ENCODE measurements at regions of chr1 and their contacts with region 1.

Region 1: DNA sequence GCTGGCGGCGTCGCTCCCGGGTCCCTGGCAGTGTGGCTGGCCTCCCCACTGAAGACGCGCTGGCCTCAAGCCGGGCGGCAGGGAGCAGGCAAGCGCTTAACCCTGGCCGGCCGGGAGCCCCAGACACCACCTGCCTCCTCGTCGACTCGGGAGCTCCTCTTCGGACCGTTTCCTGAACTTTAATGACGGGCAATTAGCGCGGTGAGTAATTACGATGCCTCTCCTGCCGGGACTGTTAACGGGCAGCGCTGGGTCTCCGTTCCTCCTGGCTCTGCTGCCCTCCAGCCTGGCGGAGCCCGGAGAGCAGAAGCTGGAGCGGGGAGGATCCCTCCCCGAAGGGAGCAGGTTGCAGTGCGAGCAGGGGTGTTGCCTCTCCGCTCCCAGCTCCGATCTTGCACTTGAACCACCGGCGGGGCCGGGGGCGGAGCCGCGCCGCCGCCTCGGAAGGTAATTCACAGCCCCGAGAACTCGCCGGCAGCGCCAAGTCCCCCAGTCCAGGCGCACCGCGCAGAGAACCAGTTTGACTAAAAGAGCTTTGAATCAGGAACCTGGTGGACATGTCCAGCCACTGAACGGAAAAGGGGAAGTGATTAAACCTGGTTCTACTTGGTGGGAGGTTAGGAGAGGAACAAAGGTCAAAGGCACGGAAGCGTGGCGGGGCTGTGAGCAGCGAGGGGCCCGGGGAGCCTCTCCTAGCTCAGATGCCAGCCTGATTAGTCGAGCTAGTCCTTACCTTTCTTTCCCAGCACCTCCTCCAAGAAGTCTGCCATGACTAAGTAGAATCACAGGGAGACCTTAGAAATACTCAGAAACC is 18.3 kb upstream of the PLEKHA6 start:
- DNase-seq: peak; percentile 28 to 57 (median 46)
- ATAC-seq: peak; percentile 71
- H3K4me3 ChIP-seq: peak overlapping the region; percentile 70
- H3K4me3 Mint-ChIP-seq: peak overlapping the region in 9 of 10 donors; percentile 88 to 96 (median 93)
- H3K27ac ChIP-seq: peak overlapping the region; percentile 4
- H3K27ac Mint-ChIP-seq: peak overlapping the region in 5 of 9 donors; percentile 3 to 79 (median 55)
- H3K4me1 ChIP-seq: peaks cover 4 to 6% of the 10 kb centered on the region in 2 donors
- H3K4me1 Mint-ChIP-seq: peaks cover 8 to 20% (median 13%) of the 10 kb centered on the region in 7 donors
- H3K27me3 ChIP-seq: peaks cover 0 to 9% of the 10 kb centered on the region in 2 donors
- H3K27me3 Mint-ChIP-seq: peaks cover 6 to 45% (median 11%) of the 10 kb centered on the region in 5 donors

Region 2: DNA sequence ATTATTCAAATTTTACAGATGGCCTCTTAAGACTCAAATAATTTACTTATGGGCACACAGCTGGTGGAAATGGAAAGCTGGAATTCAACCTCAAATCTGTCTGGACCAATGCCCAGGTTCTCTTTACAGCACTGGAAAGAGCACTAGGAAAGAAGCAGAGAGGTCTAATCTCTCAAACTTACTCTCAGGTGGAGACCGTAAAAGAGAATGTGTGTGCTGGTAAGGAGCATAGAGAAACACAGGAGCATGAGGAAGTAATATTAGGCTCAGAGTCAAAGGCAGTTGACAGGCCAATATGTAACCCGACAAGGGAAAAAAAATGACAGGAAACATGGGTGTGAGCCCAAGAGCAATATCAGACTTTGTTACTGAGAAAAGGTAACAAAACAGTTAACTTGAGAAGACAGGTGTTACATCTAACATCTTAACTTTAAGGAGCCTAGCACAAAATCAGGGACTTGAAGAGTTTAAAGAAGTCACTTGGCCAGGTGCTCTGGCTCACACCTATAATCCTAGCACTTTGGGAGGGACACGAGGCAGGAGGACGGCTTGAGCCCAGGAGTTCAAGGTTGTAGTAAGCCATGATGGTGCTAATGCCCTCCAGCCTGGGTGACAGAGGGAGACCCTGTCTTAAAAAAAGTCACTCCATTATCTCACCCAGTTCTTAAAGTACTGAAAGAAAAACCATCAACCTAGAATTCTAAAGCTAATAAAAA is 12.9 kb after region 1 on chr1:
- CTCF ChIA-PET with region 1: interaction called, 3 read pairs
- POLR2A ChIA-PET with region 1: interaction called, 3 read pairs
- intact Hi-C with region 1: loop called in 1 of 2 experiments (anchors 1 kb)
- DNase-seq: no peak
- ATAC-seq: no peak
- H3K4me3 ChIP-seq: no peak overlapping the region
- H3K4me3 Mint-ChIP-seq: peak overlapping the region in 1 of 10 donors; percentile 8
- H3K27ac ChIP-seq: no peak overlapping the region
- H3K27ac Mint-ChIP-seq: peak overlapping the region in 8 of 9 donors; percentile 6 to 82 (median 38)
- H3K4me1 ChIP-seq: peaks cover 0 to 12% of the 10 kb centered on the region in 2 donors
- H3K4me1 Mint-ChIP-seq: peaks cover 0 to 25% (median 22%) of the 10 kb centered on the region in 7 donors
- H3K27me3 ChIP-seq: no peaks in the 10 kb centered on the region
- H3K27me3 Mint-ChIP-seq: no peaks in the 10 kb centered on the region

Region 3: DNA sequence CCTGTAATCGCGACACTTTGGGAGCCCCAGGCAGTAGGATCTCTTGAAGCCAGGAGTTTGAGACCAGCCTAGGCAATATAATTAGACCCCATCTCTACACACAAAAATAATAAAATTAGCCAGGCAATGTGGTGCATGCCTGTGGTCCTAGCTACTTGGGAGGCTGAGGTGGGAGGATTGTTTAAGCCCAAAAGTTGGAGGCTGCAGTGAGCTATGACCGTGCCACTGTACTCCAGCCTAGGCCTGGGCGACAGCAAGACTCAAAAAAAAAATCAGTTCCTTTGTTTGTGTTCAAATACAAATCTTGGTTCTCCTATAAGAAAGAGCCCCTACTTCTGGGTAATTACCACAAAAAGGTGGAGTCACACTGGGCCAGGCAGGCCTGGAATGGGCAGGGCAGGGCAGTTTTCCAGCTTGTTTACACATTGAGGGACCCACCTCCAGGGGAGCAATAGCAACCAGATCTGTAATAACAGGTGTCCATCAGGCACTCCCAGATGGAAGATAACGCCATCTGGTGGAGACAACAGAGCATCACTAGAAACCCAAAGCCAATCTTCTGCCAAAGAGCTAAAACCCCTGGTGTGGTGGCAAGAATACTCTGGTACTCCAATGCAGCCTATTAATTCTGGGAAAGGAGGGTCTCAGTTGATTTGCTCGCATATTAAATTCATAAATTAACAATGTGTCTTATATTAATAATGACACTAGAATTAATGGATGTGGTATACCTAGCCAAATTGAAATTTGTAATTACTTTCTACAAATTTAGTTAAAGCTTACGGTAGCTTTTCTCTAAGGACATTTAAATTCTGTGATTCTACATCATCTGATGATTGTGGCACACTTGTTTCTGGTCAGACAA is 20.4 kb after region 1 on chr1:
- CTCF ChIA-PET with region 1: interaction called, 7 read pairs
- POLR2A ChIA-PET with region 1: interaction called, 5 read pairs
- intact Hi-C with region 1: loop called in 1 of 2 experiments (anchors 1 kb)
- DNase-seq: peak in 8 of 9 donors; percentile 44 to 74 (median 66)
- ATAC-seq: peak; percentile 92
- H3K4me3 ChIP-seq: no peak overlapping the region
- H3K4me3 Mint-ChIP-seq: no peak overlapping the region
- H3K27ac ChIP-seq: peak overlapping the region; percentile 54
- H3K27ac Mint-ChIP-seq: peak overlapping the region; percentile 55 to 91 (median 80)
- H3K4me1 ChIP-seq: no peaks in the 10 kb centered on the region
- H3K4me1 Mint-ChIP-seq: peaks cover 4 to 21% (median 8%) of the 10 kb centered on the region in 7 donors
- H3K27me3 ChIP-seq: no peaks in the 10 kb centered on the region
- H3K27me3 Mint-ChIP-seq: no peaks in the 10 kb centered on the region